Activated CD4-positive, alpha-beta T cell treated with anti-CD3 and anti-CD28 coated beads, Interleukin-2, amount 10 ng/mL, durations not matched to agents 24 days and 14 days (primary cell): ENCODE measurements at regions of chr2 and their contacts with region 1.

Region 1: GRCh38 chr2:226799181-226799975 is at the start of gene IRS1:
- DNase-seq: peak; percentile 88
- H3K4me3 Mint-ChIP-seq: peak within 1 kb of the TSS; percentile 81
- H3K27ac Mint-ChIP-seq: peak within 1 kb of the TSS; percentile 72
- H3K4me1 Mint-ChIP-seq: peaks cover 30% of the 10 kb centered on the region
- H3K27me3 Mint-ChIP-seq: peaks cover 10% of the 10 kb centered on the region
- total RNA-seq, gene IRS1: 4.7 and 4.8 TPM in 2 replicates

Region 2: GRCh38 chr2:225668606-225669266 is 1130.6 kb before region 1 on chr2:
- intact Hi-C with region 1: loop called (anchors 2 kb)
- DNase-seq: peak; percentile 76
- H3K4me3 Mint-ChIP-seq: no peak overlapping the region
- H3K27ac Mint-ChIP-seq: no peak overlapping the region
- H3K4me1 Mint-ChIP-seq: no peaks in the 10 kb centered on the region
- H3K27me3 Mint-ChIP-seq: peaks cover 7% of the 10 kb centered on the region

Region 3: DNA sequence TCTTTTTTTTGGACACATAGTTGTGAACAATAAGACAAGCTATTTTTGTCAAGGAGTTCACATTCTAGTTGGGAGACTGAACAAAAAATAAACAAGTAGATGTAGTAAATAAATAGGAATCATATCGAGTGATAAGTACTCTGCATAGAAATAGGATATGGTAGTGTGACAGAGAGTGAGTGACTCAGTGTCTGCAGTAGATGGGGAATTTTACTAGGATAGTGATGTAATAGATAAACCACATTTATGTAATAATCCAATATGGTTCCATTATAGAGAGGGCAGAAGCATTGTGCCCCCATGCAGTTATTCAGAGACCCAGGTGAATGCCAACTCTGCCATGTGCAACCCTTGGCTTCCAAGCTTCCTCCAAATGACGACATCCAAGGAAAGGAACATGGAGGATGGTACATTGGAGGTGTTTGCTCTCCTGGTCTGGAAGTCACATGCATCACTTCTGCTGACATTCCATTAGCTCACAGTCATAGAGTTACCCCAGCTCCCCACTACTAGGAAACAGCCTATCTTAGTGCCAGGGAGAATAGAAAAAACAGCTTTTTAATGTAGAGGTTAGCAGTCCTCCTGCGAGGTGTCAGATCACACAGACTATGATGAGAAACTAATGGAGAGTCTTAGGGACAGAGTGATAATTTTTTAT is 804.5 kb before region 1 on chr2:
- intact Hi-C with region 1: loop called (anchors 5 kb)
- DNase-seq: no peak
- H3K4me3 Mint-ChIP-seq: no peak overlapping the region
- H3K27ac Mint-ChIP-seq: no peak overlapping the region
- H3K4me1 Mint-ChIP-seq: no peaks in the 10 kb centered on the region
- H3K27me3 Mint-ChIP-seq: no peaks in the 10 kb centered on the region

Region 4: GRCh38 chr2:226423498-226423960 is 375.8 kb before region 1 on chr2:
- intact Hi-C with region 1: loop called (anchors 5 kb)
- DNase-seq: peak; percentile 87
- H3K4me3 Mint-ChIP-seq: peak overlapping the region; percentile 54
- H3K27ac Mint-ChIP-seq: peak overlapping the region; percentile 23
- H3K4me1 Mint-ChIP-seq: peaks cover 16% of the 10 kb centered on the region
- H3K27me3 Mint-ChIP-seq: peaks cover 25% of the 10 kb centered on the region

Region 5: GRCh38 chr2:226649871-226650660 is 149.3 kb before region 1 on chr2:
- intact Hi-C with region 1: loop called (anchors 2 kb)
- DNase-seq: peak; percentile 89
- H3K4me3 Mint-ChIP-seq: peak overlapping the region; percentile 71
- H3K27ac Mint-ChIP-seq: peak overlapping the region; percentile 94
- H3K4me1 Mint-ChIP-seq: peaks cover 42% of the 10 kb centered on the region
- H3K27me3 Mint-ChIP-seq: no peaks in the 10 kb centered on the region

Region 6: GRCh38 chr2:226984750-226985582 is 185.6 kb after region 1 on chr2:
- intact Hi-C with region 1: loop called (anchors 2 kb)
- DNase-seq: peak; percentile 77
- H3K4me3 Mint-ChIP-seq: no peak overlapping the region
- H3K27ac Mint-ChIP-seq: no peak overlapping the region
- H3K4me1 Mint-ChIP-seq: peaks cover 26% of the 10 kb centered on the region
- H3K27me3 Mint-ChIP-seq: no peaks in the 10 kb centered on the region